Activated T-helper 1 cell treated with anti-CD3 and anti-CD28 coated beads, Interleukin-12 subunit alpha, Interleukin-12 subunit beta, Interleukin-2, Interleukin-4 antibody, amounts not matched to agents 30 ng/mL and 10 ng/mL and 1 ng/mL, durations not matched to agents 14 hours and 24 hours and 36 hours (primary cell): ENCODE measurements at regions of chr12 and their contacts with region 1.

Region 1: GRCh38 chr12:44774815-44775411 is 101.2 kb downstream of the NELL2 start:
- DNase-seq: peak; percentile 18
- H3K4me3 Mint-ChIP-seq: no peak overlapping the region
- H3K27ac Mint-ChIP-seq: no peak overlapping the region
- H3K4me1 Mint-ChIP-seq: no peaks in the 10 kb centered on the region
- H3K27me3 Mint-ChIP-seq: no peaks in the 10 kb centered on the region

Region 2: DNA sequence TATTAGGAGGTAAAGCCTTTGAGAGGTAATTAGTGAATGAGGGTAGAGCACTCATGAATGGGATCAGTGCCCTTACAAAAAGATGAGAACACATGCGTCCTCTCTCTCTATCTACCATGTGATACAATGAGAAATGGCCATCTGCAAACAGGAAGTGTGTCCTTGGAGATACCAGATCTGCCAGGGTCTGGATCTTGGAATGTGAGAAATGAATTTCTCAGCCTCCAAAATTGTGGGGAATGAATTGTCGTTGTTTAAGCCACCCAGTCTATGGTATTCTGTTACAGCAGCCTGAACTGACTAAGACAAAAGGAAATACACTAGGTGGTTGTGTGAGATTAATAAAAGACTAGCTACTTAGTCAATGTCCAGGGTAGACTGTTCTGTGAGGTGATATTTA is 265.4 kb before region 1 on chr12:
- intact Hi-C with region 1: no loop called
- DNase-seq: no peak
- H3K4me3 Mint-ChIP-seq: no peak overlapping the region
- H3K27ac Mint-ChIP-seq: no peak overlapping the region
- H3K4me1 Mint-ChIP-seq: no peaks in the 10 kb centered on the region
- H3K27me3 Mint-ChIP-seq: no peaks in the 10 kb centered on the region

Region 3: GRCh38 chr12:44812062-44812461 is 37.1 kb after region 1 on chr12:
- intact Hi-C with region 1: loop called (anchors 2 kb)
- DNase-seq: peak; percentile 36
- H3K4me3 Mint-ChIP-seq: no peak overlapping the region
- H3K27ac Mint-ChIP-seq: no peak overlapping the region
- H3K4me1 Mint-ChIP-seq: peaks cover 20% of the 10 kb centered on the region
- H3K27me3 Mint-ChIP-seq: no peaks in the 10 kb centered on the region